ENCODE measurements at regions of chr9 and their contacts with region 1.

Region 1: DNA sequence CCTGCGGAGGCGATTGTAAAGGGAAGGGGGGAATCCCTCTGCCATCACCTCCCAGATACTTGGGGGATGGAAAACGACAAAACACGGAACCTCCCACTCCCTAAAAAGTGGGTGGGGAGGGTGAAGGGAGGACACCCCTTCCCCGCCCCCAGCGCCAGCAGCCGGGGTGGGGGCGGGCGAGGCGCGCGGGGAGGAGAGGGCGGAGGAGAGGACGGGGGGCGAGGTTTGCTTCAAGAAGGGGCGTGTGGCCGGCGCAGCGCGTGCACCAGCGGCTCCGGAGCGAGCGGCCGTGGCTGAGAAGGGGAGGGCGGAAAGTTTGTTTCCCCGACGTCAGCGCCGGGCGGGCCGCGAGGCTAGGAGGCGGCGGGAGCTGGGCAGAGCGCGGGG is at the start of gene PRRX2:
- DNase-seq: peak; percentile 83 to 91
- ATAC-seq: peak; percentile 80
- H3K4me3 ChIP-seq: peak within 1 kb of the TSS; percentile 85 to 95
- H3K27ac ChIP-seq: peak within 1 kb of the TSS; percentile 52 to 59
- H3K4me1 ChIP-seq: no peaks in the 10 kb centered on the region
- H3K27me3 ChIP-seq: no peaks in the 10 kb centered on the region
- total RNA-seq, gene PRRX2: 51.9 to 68.8 TPM

Region 2: GRCh38 chr9:129597355-129598088 is 67.9 kb before region 1 on chr9:
- intact Hi-C with region 1: no loop called
- DNase-seq: peak; percentile 81 to 89
- ATAC-seq: peak; percentile 83
- H3K4me3 ChIP-seq: peak overlapping the region in 1 of 2 donors; percentile 12
- H3K27ac ChIP-seq: peak overlapping the region in 1 of 2 donors; percentile 1
- H3K4me1 ChIP-seq: no peaks in the 10 kb centered on the region
- H3K27me3 ChIP-seq: no peaks in the 10 kb centered on the region

Region 3: GRCh38 chr9:129641746-129642513 is 23.5 kb before region 1 on chr9 and contains the start of gene ASB6:
- intact Hi-C with region 1: loop called in 1 of 2 experiments (anchors 1 kb)
- DNase-seq: peak; percentile 98 to 100
- ATAC-seq: peak; percentile 98
- H3K4me3 ChIP-seq: peak within 1 kb of the TSS; percentile 70 to 86
- H3K27ac ChIP-seq: peak within 1 kb of the TSS in 1 of 2 donors; percentile 23
- H3K4me1 ChIP-seq: no peaks in the 10 kb centered on the region
- H3K27me3 ChIP-seq: no peaks in the 10 kb centered on the region
- total RNA-seq, gene ASB6: 15.8 to 20.8 TPM

Region 4: GRCh38 chr9:129712634-129713401 is 47.4 kb after region 1 on chr9:
- intact Hi-C with region 1: loop called in 1 of 2 experiments (anchors 5 kb)
- DNase-seq: peak; percentile 69 to 87
- ATAC-seq: peak; percentile 15
- H3K4me3 ChIP-seq: no peak overlapping the region
- H3K27ac ChIP-seq: peak overlapping the region; percentile 81 to 88
- H3K4me1 ChIP-seq: peaks cover 4% of the 10 kb centered on the region in 2 donors
- H3K27me3 ChIP-seq: no peaks in the 10 kb centered on the region

Region 5: DNA sequence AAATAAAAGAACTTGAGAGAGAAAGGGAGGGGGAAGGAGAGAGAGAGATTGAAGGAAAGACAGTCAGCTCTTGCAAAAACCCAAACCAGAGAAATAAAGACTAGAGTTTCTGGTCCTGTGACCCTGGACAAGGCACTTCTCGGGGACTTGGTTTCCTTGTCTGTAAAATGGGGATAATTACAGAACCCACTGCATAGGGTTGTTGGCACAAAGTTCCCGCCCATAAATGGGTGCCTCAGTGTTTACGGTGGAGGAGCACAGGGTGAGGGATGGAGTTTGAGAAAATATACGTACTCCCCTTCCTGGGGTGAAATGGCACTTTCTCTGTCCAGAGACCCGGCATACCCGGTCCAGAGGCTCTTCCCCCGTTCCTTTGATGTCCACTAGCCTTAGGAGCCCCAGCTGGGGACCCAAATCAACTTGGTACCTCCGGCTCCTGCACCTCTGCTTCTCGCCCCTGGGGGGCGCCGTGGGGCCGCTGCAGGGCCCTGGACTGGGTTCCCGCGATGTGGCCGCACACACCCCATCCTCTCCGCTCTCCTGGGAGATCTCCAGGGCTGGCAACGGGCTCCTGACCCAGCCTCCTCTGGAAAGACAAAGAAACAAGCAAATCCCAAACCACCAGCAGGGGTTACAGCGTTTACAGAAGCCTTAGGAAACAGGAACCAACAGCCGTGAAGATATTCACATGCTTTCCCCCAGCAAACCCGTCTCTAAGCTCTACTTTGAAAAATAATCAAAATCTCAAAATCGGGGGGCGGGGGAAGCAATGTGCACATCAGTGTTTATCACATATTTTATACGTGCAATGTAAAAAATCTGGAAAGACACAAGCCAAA is 61.2 kb after region 1 on chr9:
- intact Hi-C with region 1: loop called in 1 of 2 experiments (anchors 5 kb)
- DNase-seq: peak; percentile 86 to 91
- ATAC-seq: peak; percentile 93
- H3K4me3 ChIP-seq: no peak overlapping the region
- H3K27ac ChIP-seq: peak overlapping the region; percentile 30 to 44
- H3K4me1 ChIP-seq: no peaks in the 10 kb centered on the region
- H3K27me3 ChIP-seq: no peaks in the 10 kb centered on the region